Activated naive CD4-positive, alpha-beta T cell treated with anti-CD3 and anti-CD28 coated beads for 36 hours (primary cell): ENCODE measurements at regions of chr16 and their contacts with region 1.

Region 1: DNA sequence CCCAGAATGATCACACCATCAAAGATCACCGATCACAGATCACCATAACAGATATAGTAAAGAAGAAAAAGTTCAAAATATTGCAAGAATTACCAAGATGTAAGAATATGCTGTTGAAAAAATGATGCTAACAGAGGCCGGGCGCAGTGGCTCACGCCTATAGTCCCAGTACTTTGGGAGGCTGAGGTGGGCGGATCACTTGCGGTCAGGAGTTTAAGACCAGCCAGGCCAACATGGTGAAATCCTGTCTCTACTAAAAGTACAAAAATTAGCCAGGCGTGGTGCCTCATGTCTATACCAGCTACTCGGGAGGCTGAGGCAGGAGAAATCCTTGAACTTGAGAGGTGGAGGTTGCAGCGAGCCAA is 53.2 kb downstream of the CPPED1 start:
- DNase-seq: no peak
- H3K4me3 Mint-ChIP-seq: no peak overlapping the region
- H3K27ac Mint-ChIP-seq: peak overlapping the region; percentile 29
- H3K4me1 Mint-ChIP-seq: peaks cover 25% of the 10 kb centered on the region
- H3K27me3 Mint-ChIP-seq: no peaks in the 10 kb centered on the region

Region 2: DNA sequence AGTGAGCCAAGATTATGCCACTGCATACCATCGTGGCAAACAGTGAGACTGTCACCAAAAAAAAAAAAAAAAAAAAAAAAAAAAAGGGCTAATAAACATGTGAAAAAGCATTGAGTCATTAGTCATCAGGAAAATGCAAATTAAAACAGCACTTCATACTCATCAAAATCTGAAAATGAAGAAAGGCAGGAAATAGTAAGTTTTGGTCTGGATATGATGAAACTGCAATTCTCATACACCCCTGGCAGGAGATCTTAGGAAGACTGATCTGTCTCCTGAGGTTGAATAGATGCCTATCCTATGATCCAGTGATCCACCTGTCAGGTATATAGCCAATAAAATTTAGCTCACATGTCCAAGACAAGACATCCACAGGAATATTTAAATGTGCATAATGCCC is 159.6 kb before region 1 on chr16:
- CTCF ChIA-PET with region 1: no interaction called
- intact Hi-C with region 1: loop called (anchors 1 kb)
- DNase-seq: no peak
- H3K4me3 Mint-ChIP-seq: no peak overlapping the region
- H3K27ac Mint-ChIP-seq: no peak overlapping the region
- H3K4me1 Mint-ChIP-seq: peaks cover 15% of the 10 kb centered on the region
- H3K27me3 Mint-ChIP-seq: peaks cover 12% of the 10 kb centered on the region

Region 3: GRCh38 chr16:12613131-12613991 is 137.2 kb before region 1 on chr16:
- CTCF ChIA-PET with region 1: no interaction called
- intact Hi-C with region 1: loop called (anchors 1 kb)
- DNase-seq: peak; percentile 69
- H3K4me3 Mint-ChIP-seq: no peak overlapping the region
- H3K27ac Mint-ChIP-seq: no peak overlapping the region
- H3K4me1 Mint-ChIP-seq: peaks cover 26% of the 10 kb centered on the region
- H3K27me3 Mint-ChIP-seq: peaks cover 14% of the 10 kb centered on the region

Region 4: DNA sequence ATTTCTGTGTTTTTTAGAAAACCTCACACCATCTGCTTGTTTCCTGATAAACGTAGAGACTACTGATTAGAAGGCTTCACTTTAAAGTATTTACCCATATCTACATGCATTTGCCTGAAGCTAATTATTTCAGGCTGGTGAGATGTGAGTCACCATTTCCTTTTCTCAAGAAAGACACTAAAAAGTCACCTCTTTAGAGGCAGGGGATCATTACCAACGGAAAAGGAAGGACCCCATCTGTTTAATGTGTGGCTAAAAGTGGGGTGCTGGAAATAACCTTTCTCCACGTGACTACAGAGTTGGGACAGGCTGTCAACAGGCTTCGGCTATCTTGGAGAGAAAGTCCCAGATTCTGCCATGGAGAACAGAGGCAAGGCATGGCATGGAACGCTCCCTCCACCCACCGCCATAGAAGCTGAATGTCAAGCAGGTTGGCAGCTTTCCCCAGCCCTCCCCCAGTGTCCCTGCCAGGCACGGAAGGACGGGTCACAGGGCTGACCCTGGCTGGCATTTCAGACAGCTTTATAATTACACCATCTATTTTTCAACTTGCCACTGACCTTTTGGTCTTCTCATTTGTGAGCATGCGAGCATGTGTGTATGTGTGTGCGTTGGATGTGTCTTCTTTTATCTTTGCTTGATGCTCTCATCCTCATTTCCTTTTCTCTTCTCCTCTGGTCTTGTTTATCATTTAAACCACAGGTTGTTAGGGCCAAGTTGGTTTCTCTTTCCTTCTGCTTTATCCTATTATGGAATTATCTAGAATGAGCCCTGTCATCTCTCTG is 103.9 kb before region 1 on chr16:
- CTCF ChIA-PET with region 1: no interaction called
- intact Hi-C with region 1: loop called (anchors 1 kb)
- DNase-seq: peak; percentile 53
- H3K4me3 Mint-ChIP-seq: peak overlapping the region; percentile 16
- H3K27ac Mint-ChIP-seq: peak overlapping the region; percentile 85
- H3K4me1 Mint-ChIP-seq: peaks cover 18% of the 10 kb centered on the region
- H3K27me3 Mint-ChIP-seq: no peaks in the 10 kb centered on the region

Region 5: DNA sequence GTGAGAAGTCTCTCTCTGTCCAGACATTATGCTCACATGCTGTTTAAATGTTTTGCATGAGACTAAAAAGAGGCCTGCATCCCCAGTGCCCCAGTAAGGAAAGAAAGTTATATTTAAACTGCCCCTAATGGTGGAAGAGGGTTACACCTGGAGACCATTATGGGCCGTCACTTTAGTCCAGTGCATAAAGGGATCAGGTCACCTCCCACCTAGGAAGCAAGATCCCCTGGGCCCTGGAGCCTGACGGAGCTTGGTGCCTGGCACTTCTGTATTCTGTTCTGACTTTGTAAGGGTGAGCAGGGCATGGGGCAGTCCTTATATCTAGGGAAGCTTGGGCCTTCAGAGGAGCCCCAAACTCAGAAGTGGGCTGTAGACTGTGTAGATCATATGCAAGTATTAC is 14.7 kb before region 1 on chr16:
- CTCF ChIA-PET with region 1: no interaction called
- intact Hi-C with region 1: no loop called
- DNase-seq: no peak
- H3K4me3 Mint-ChIP-seq: no peak overlapping the region
- H3K27ac Mint-ChIP-seq: no peak overlapping the region
- H3K4me1 Mint-ChIP-seq: no peaks in the 10 kb centered on the region
- H3K27me3 Mint-ChIP-seq: no peaks in the 10 kb centered on the region

Region 6: DNA sequence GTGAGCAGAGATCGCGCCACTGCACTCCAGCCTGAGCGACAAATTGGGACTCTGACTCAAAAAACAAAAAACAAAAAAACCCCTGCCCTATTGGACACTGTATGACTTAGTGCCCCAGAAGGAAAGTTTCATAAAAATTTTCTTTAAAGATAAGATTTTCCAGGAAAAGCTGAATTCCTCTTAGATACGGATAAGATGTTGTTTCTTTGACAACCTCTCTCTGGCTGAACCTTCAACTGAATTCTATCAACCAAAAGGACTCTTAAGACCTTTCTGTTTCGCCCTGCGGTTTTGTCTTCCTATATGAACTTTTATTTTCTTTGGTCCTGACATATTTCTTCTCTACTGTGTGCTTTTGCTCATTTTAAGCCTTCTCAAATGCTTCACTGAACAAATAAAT is 17.4 kb after region 1 on chr16:
- CTCF ChIA-PET with region 1: no interaction called
- intact Hi-C with region 1: loop called (anchors 1 kb)
- DNase-seq: no peak
- H3K4me3 Mint-ChIP-seq: no peak overlapping the region
- H3K27ac Mint-ChIP-seq: no peak overlapping the region
- H3K4me1 Mint-ChIP-seq: peaks cover 12% of the 10 kb centered on the region
- H3K27me3 Mint-ChIP-seq: no peaks in the 10 kb centered on the region

Region 7: GRCh38 chr16:12803203-12804097 is 52.9 kb after region 1 on chr16 and contains the start of gene CPPED1:
- CTCF ChIA-PET with region 1: interaction called, 3 read pairs
- intact Hi-C with region 1: loop called (anchors 1 kb)
- DNase-seq: peak; percentile 92
- H3K4me3 Mint-ChIP-seq: peak within 1 kb of the TSS; percentile 91
- H3K27ac Mint-ChIP-seq: peak within 1 kb of the TSS; percentile 90
- H3K4me1 Mint-ChIP-seq: peaks cover 20% of the 10 kb centered on the region
- H3K27me3 Mint-ChIP-seq: no peaks in the 10 kb centered on the region
- total RNA-seq, gene CPPED1: 6.4 to 6.5 TPM

Region 8: GRCh38 chr16:12826559-12826958 is 76.0 kb after region 1 on chr16:
- CTCF ChIA-PET with region 1: interaction called, 3 read pairs
- intact Hi-C with region 1: loop called (anchors 1 kb)
- DNase-seq: peak; percentile 49
- H3K4me3 Mint-ChIP-seq: no peak overlapping the region
- H3K27ac Mint-ChIP-seq: no peak overlapping the region
- H3K4me1 Mint-ChIP-seq: peaks cover 5% of the 10 kb centered on the region
- H3K27me3 Mint-ChIP-seq: peaks cover 8% of the 10 kb centered on the region